WTC11 (cell line): ENCODE measurements at regions of chr12 and their contacts with region 1.

Region 1: GRCh38 chr12:49130151-49131050 is 794 bp downstream of the TUBA1B start:
- DNase-seq: peak; percentile 90
- ATAC-seq: peak; percentile 65
- H3K4me3 Mint-ChIP-seq: peak overlapping the region; percentile 90
- H3K27ac Mint-ChIP-seq: peak overlapping the region; percentile 99
- H3K4me1 Mint-ChIP-seq: peaks cover 19% of the 10 kb centered on the region
- H3K27me3 Mint-ChIP-seq: no peaks in the 10 kb centered on the region; the same call in 1 of the 2 replicates
- CTCF ChIP-seq: peak; percentile 64

Region 2: GRCh38 chr12:49010092-49010668 is 120.2 kb before region 1 on chr12:
- CTCF ChIA-PET with region 1: no interaction called
- POLR2A ChIA-PET with region 1: no interaction called
- DNase-seq: no peak
- ATAC-seq: no peak
- H3K4me3 Mint-ChIP-seq: no peak overlapping the region
- H3K27ac Mint-ChIP-seq: no peak overlapping the region
- H3K4me1 Mint-ChIP-seq: peaks cover 4% of the 10 kb centered on the region; the same call in 1 of the 2 replicates
- H3K27me3 Mint-ChIP-seq: no peaks in the 10 kb centered on the region
- CTCF ChIP-seq: no peak

Region 3: GRCh38 chr12:49098035-49098451 is 32.4 kb before region 1 on chr12:
- CTCF ChIA-PET with region 1: interaction called, 13 read pairs
- POLR2A ChIA-PET with region 1: interaction called, 3 read pairs
- DNase-seq: peak; percentile 87
- ATAC-seq: peak; percentile 73
- H3K4me3 Mint-ChIP-seq: no peak overlapping the region
- H3K27ac Mint-ChIP-seq: no peak overlapping the region
- H3K4me1 Mint-ChIP-seq: peaks cover 21% of the 10 kb centered on the region
- H3K27me3 Mint-ChIP-seq: peaks cover 29% of the 10 kb centered on the region
- CTCF ChIP-seq: peak; percentile 92

Region 4: GRCh38 chr12:49110464-49111155 is 19.8 kb before region 1 on chr12 and contains the start of gene LMBR1L:
- CTCF ChIA-PET with region 1: interaction called, 39 read pairs
- POLR2A ChIA-PET with region 1: interaction called, 4 read pairs
- DNase-seq: peak; percentile 97
- ATAC-seq: peak; percentile 96
- H3K4me3 Mint-ChIP-seq: peak within 1 kb of the TSS; percentile 96
- H3K27ac Mint-ChIP-seq: peak within 1 kb of the TSS; percentile 98
- H3K4me1 Mint-ChIP-seq: peaks cover 29% of the 10 kb centered on the region
- H3K27me3 Mint-ChIP-seq: peaks cover 4% of the 10 kb centered on the region
- CTCF ChIP-seq: no peak
- total RNA-seq, gene LMBR1L: 52.8 to 78.2 TPM (median 53.1 TPM) in 3 replicates

Region 5: GRCh38 chr12:49188914-49189367 is 58.5 kb after region 1 on chr12 and contains the start of gene TUBA1A:
- CTCF ChIA-PET with region 1: interaction called, 11 read pairs
- POLR2A ChIA-PET with region 1: interaction called, 4 read pairs
- DNase-seq: peak; percentile 95
- ATAC-seq: peak; percentile 98
- H3K4me3 Mint-ChIP-seq: peak within 1 kb of the TSS; percentile 93
- H3K27ac Mint-ChIP-seq: peak within 1 kb of the TSS; percentile 98
- H3K4me1 Mint-ChIP-seq: peaks cover 11% of the 10 kb centered on the region
- H3K27me3 Mint-ChIP-seq: no peaks in the 10 kb centered on the region
- CTCF ChIP-seq: no peak
- total RNA-seq, gene TUBA1A: 195 to 226 TPM (median 203 TPM) in 3 replicates

Region 6: DNA sequence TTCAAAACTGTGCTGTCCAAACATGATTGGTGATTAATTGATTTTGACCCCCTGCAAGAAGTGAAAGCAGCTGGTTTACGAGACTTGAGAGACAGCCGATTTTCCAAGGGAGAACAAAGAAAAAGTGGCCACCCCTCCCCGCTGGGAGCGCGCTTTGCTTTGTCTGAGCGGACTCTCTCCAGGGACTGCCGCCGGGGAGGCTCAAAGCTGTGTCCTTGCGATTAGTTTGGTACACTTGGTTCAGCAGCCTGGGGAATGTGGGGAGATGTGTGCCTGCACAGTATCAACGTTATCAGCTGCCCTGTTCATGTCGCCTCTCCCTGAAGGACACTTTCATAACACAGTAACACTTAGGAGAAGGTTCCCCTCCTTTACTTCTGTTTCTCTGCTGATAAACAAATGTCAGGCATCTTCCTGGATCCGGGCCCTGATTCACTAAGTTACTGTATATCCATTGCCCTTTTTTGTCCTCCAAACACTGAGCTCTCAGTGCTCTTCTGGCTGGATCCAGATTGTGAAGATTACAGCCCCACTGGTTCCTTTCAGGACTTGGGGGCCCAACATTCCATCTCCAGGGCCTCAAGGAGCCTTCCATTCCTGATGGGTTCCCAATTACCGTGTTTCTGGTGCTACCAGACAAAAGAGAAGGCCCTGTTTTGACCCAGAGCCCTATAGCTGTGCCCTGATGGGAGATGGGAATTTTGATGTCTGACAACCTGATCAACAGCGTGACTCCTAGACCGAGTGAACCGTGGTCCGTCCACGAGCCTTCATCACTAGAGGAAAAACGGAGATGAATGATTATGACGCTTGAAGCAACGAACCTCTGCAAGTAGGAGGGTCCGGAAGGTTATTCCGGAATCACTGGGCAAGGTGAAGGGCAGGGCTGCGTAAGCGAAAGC is 102.8 kb after region 1 on chr12:
- CTCF ChIA-PET with region 1: interaction called, 32 read pairs
- POLR2A ChIA-PET with region 1: interaction called, 10 read pairs
- DNase-seq: peak; percentile 62
- ATAC-seq: peak; percentile 34
- H3K4me3 Mint-ChIP-seq: peak overlapping the region; percentile 38
- H3K27ac Mint-ChIP-seq: no peak overlapping the region
- H3K4me1 Mint-ChIP-seq: peaks cover 27% of the 10 kb centered on the region
- H3K27me3 Mint-ChIP-seq: peaks cover 6% of the 10 kb centered on the region; the same call in 1 of the 2 replicates
- CTCF ChIP-seq: no peak

Region 7: GRCh38 chr12:49288412-49288853 is 158.0 kb after region 1 on chr12:
- CTCF ChIA-PET with region 1: no interaction called
- POLR2A ChIA-PET with region 1: no interaction called
- DNase-seq: peak; percentile 76
- ATAC-seq: peak; percentile 48
- H3K4me3 Mint-ChIP-seq: no peak overlapping the region
- H3K27ac Mint-ChIP-seq: no peak overlapping the region
- H3K4me1 Mint-ChIP-seq: peaks cover 17% of the 10 kb centered on the region
- H3K27me3 Mint-ChIP-seq: peaks cover 59% of the 10 kb centered on the region
- CTCF ChIP-seq: peak; percentile 80